Activated CD4-positive, alpha-beta T cell treated with anti-CD3 and anti-CD28 coated beads for 36 hours (primary cell): ENCODE measurements at regions of chr18 and their contacts with region 1.

Region 1: DNA sequence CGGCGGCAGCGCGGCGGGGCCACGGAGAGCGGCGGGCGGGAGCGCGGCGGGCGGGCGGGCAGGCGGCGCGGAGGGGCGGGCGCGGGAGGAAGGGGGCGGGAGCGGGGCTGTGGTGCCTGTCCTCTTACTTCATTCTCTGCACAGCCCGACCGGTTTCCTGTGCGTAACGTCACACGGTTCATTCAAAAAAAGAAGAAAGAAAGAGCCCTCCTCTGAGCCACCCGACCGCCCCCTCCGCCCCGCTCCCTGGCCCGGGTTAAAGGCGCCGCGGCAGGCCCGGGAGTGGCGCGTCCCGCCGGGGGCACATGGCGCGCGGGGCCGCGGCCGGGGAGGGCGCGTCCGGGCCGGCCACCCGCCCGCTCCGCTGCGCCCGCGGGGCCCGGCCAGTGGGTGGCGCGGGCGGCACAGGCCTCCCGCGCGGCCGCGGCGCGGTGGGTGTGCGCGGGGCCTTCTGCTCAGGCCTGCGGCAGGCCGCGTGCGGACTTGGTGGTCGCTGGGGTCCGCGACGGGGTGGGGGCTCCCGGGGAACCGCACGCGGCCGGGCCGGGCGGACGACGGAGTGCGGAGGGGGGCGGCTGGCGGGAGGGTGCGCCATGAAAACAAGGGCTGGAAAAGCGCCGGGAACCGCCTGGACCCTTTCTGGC is 599 bp upstream of the BCL2 start:
- DNase-seq: peak; percentile 90
- ATAC-seq: peak; percentile 70
- H3K4me3 Mint-ChIP-seq: peak overlapping the region; percentile 98
- H3K27ac Mint-ChIP-seq: peak overlapping the region; percentile 95
- H3K4me1 Mint-ChIP-seq: peaks cover 23% of the 10 kb centered on the region
- H3K27me3 Mint-ChIP-seq: no peaks in the 10 kb centered on the region

Region 2: DNA sequence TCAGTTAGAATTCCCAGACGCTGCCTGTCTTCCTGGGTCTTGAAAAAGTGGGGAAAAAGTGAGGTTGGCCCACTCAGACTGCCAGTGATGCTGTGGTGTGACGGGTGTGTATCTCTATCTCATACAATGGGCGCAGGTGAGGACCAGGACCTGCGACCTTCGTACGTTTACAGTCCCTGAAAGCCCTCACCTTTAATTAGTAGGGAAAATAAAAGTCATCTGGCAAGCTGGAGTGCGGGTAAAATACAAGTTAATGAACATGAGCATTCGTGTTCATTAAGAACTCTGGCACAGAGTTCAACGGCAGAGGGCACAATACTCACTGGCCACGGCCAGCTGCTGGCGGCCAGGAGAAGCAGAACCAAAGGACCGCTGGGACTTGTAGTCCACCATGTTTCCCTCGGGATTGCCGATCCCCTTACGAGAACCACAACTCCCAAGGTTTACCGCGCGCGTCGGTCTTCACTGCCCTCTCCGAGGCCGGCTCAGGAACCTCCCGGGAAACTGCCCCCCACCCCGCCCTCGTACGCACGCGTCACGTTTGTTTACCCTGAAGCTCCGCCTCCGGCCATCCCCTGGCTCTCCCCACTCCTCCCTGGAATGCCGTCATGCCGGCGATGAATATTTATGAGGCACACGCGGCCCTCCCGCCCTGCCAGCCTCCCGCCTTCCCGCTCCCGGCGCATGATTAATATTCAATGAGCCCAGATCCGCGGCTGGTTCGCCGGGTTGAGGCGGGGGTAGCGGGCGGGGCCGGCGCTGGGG is 605.3 kb before region 1 on chr18:
- CTCF ChIA-PET with region 1: interaction called, 5 read pairs
- POLR2A ChIA-PET with region 1: no interaction called
- intact Hi-C with region 1: loop called in 1 of 2 experiments (anchors 10 kb)
- DNase-seq: peak; percentile 95
- ATAC-seq: peak; percentile 81
- H3K4me3 Mint-ChIP-seq: peak overlapping the region; percentile 81
- H3K27ac Mint-ChIP-seq: peak overlapping the region; percentile 69
- H3K4me1 Mint-ChIP-seq: peaks cover 28% of the 10 kb centered on the region
- H3K27me3 Mint-ChIP-seq: no peaks in the 10 kb centered on the region

Region 3: GRCh38 chr18:63131106-63131958 is 188.8 kb before region 1 on chr18:
- CTCF ChIA-PET with region 1: interaction called, 46 read pairs
- POLR2A ChIA-PET with region 1: interaction called, 4 read pairs
- intact Hi-C with region 1: loop called (anchors 1 kb)
- DNase-seq: peak; percentile 69
- ATAC-seq: peak; percentile 60
- H3K4me3 Mint-ChIP-seq: no peak overlapping the region
- H3K27ac Mint-ChIP-seq: peak overlapping the region; percentile 74
- H3K4me1 Mint-ChIP-seq: peaks cover 29% of the 10 kb centered on the region
- H3K27me3 Mint-ChIP-seq: no peaks in the 10 kb centered on the region

Region 4: GRCh38 chr18:63161761-63162195 is 158.4 kb before region 1 on chr18:
- CTCF ChIA-PET with region 1: interaction called, 18 read pairs
- POLR2A ChIA-PET with region 1: interaction called, 6 read pairs
- intact Hi-C with region 1: loop called (anchors 1 kb)
- DNase-seq: peak; percentile 90
- ATAC-seq: peak; percentile 79
- H3K4me3 Mint-ChIP-seq: peak overlapping the region; percentile 73
- H3K27ac Mint-ChIP-seq: peak overlapping the region; percentile 95
- H3K4me1 Mint-ChIP-seq: peaks cover 78% of the 10 kb centered on the region
- H3K27me3 Mint-ChIP-seq: no peaks in the 10 kb centered on the region

Region 5: GRCh38 chr18:63216516-63217311 is 103.5 kb before region 1 on chr18:
- CTCF ChIA-PET with region 1: interaction called, 12 read pairs
- POLR2A ChIA-PET with region 1: interaction called, 4 read pairs
- intact Hi-C with region 1: loop called (anchors 1 to 2 kb)
- DNase-seq: peak; percentile 56
- ATAC-seq: peak; percentile 28
- H3K4me3 Mint-ChIP-seq: peak overlapping the region; percentile 34
- H3K27ac Mint-ChIP-seq: peak overlapping the region; percentile 91
- H3K4me1 Mint-ChIP-seq: peaks cover 95% of the 10 kb centered on the region
- H3K27me3 Mint-ChIP-seq: no peaks in the 10 kb centered on the region

Region 6: DNA sequence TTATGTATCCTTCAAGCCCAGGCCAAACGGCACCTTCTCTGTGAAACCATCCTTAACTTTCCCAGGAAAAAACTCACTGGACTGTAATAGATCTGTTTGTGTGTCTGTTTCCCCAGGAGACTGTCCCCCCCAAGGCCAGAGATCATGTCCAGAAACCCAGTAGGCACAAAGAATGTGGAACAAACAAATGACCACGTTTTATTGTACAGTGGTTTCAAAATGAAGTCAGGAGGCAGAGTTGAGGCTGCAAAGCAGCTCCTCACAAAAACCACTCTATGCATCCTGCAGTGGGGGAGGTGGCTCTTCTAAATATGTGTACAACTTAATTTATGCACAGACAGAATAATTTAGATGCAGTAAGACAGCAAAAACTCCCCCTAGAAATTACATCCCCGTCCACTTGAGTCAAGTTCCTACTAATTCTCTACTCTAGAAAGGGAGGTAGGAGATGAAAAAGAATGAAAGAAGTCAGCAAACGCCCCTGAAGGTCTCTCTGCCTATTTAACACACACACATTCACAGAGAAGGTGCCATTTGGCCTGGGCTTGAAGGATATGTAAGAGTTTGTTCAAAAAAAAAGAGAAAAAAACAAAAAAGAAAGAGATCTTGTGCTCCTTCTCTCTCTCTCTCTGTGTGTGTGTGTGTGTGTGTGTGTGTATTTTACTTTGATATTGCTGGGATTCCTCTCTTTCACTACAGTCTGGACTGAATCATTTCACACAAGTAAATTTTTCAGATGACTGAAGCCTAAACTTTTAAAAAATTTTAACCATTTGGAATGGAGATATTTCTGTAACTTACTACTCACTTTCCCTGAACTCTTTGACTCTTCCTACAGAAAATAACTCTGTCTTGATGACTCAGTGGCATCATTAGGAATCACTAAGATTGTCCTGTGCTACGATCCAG is 20.1 kb before region 1 on chr18:
- CTCF ChIA-PET with region 1: interaction called, 31 read pairs
- POLR2A ChIA-PET with region 1: interaction called, 3 read pairs
- intact Hi-C with region 1: loop called (anchors 1 kb)
- DNase-seq: peak; percentile 69
- ATAC-seq: peak; percentile 71
- H3K4me3 Mint-ChIP-seq: peak overlapping the region; percentile 43
- H3K27ac Mint-ChIP-seq: peak overlapping the region; percentile 90
- H3K4me1 Mint-ChIP-seq: peaks cover 75% of the 10 kb centered on the region
- H3K27me3 Mint-ChIP-seq: no peaks in the 10 kb centered on the region

Region 7: DNA sequence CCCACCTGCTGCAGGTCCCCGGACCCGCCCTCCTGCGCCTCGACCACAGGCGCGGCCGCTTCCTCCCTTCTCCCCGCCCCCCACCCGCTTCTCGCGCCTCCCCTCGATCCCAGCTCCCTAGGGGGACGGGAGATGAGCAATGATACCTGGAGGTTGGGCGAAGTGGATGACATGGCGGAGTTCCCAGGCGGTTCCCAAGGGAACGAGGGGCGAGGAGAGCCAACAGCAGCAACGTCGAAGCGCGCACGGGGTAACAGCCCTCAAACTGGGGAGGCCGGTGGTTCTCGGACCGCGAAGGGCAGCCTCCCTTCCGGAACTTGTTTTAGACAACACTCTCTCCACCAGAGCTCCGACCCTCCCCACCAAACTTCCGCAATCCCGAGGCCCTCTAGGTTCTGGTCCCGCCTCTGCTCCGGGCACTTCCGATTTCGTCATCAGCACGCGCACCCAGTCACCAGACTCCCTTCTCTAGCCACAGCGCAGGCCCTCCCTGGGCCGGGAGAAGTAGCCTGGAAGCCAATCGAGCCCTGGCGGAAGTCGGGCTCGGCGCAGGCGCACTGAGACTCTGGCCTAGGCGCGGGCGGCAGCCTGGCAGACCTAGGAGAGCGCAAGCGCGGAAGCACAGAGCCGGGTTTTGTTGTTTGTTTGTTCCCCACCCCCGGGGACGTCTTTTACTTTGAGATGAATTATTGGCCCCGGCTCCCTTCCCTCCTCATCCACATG is 102.1 kb after region 1 on chr18 and contains the start of gene VPS4B:
- CTCF ChIA-PET with region 1: interaction called, 3 read pairs
- POLR2A ChIA-PET with region 1: interaction called, 6 read pairs
- intact Hi-C with region 1: loop called in 1 of 2 experiments (anchors 1 kb)
- DNase-seq: peak; percentile 100
- ATAC-seq: peak; percentile 95
- H3K4me3 Mint-ChIP-seq: peak within 1 kb of the TSS; percentile 99
- H3K27ac Mint-ChIP-seq: peak within 1 kb of the TSS; percentile 95
- H3K4me1 Mint-ChIP-seq: peaks cover 30% of the 10 kb centered on the region
- H3K27me3 Mint-ChIP-seq: no peaks in the 10 kb centered on the region
- total RNA-seq, gene VPS4B: 40.7 to 48.4 TPM